ENCODE measurements at regions of chr4 and their contacts with region 1.

Region 1: DNA sequence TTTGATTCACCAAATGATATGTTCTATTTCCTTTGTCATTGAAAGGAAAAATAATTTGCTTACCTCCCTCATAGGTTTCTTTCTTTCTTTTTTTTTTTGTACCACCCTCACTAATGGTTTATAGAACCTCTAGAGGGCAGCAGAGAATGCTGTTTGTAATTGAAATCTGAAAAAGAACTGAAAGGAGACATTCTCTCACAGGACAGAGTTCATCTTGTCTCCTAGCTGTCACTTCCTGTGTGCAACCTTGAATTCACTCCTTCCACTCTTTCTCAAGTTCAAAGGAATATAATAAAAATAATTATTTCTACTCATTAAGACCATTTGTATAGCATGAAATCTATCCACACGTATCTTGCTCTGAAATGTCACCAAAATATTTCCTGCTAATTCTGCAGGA is 51.0 kb downstream of the GUCY1B1 start:
- DNase-seq: no peak
- ATAC-seq: peak; percentile 61

Region 2: GRCh38 chr4:155953151-155954114 is 143.6 kb after region 1 on chr4 and contains the start of gene CTSO:
- intact Hi-C with region 1: loop called (anchors 10 kb)
- DNase-seq: peak; percentile 87
- ATAC-seq: peak; percentile 98
- total RNA-seq, gene CTSO: 6.2 TPM